Endothelial cell of umbilical vein (primary cell): ENCODE measurements at regions of chr5 and their contacts with region 1.

Region 1: DNA sequence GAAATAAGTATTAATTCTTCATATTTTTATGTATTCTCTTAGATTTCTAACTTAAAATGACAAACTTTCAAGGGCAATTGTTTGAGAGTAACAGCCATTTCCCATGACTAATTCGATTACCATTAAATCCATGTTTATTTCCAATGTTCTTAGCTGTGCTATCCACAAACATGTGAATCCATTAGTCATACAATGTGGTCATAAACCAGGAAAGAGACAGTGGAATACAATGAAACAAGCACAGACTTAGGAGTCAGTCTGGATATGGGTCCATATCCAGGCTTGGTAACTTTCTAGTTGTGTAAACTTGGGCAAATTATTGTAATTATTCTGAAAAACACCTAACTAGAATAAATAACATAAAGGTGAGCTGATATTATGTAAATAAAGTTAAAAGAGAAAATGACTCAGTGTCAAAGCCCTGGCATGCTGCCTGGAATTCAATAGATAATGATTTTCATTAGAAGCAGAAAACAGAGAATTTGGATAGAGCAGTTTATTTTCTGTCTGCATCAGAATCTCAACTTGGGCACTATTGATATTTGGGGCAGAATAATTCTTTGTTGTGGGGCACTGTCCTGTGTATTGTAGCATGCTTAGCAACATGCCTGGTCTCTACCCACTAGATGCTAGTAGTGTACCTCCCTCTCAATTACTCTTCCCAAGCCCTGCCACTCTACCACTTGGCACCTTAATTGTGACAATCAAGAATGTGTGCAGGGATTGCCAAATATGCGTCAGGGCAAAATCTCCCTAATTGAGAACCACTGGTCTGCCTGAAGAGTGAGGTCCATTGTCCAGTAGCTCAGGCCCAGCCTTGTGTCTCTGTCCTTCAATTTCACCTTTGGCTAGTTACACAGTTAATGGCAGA is 44.7 kb upstream of the SLC27A6 start:
- DNase-seq: peak; percentile 90
- H3K4me3 ChIP-seq: no peak overlapping the region
- H3K27ac ChIP-seq: peak overlapping the region; percentile 87
- H3K4me1 ChIP-seq: peaks cover 15% of the 10 kb centered on the region
- H3K27me3 ChIP-seq: no peaks in the 10 kb centered on the region
- CTCF ChIP-seq: no peak
- POLR2A ChIP-seq: no peak

Region 2: GRCh38 chr5:128815201-128815600 is 105.4 kb before region 1 on chr5:
- CTCF ChIA-PET with region 1: no interaction called
- POLR2A ChIA-PET with region 1: no interaction called
- dilution Hi-C with region 1: no loop called
- intact Hi-C with region 1: no loop called
- DNase-seq: no peak
- H3K4me3 ChIP-seq: no peak overlapping the region
- H3K27ac ChIP-seq: no peak overlapping the region
- H3K4me1 ChIP-seq: peaks cover 13% of the 10 kb centered on the region
- H3K27me3 ChIP-seq: no peaks in the 10 kb centered on the region
- CTCF ChIP-seq: no peak
- POLR2A ChIP-seq: no peak

Region 3: DNA sequence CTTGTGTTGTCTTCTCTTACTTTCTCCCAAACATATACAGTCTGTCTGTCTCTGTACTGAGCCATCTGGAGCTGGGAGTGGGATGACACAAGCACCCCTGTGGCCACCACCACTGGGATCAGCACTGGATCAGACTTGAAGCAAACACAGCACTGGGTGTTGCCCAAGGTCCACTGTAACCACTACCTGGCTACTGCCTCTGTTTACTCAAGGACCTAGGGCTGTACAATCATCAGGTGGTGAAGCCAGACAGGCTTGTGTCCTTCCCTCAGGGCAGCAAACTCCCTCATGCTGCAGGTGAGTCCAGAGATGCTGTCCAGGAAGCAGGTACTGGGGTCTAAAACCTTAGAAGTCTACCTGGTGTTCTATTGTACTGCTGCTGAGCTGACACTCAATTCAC is 25.0 kb before region 1 on chr5:
- CTCF ChIA-PET with region 1: no interaction called
- POLR2A ChIA-PET with region 1: no interaction called
- dilution Hi-C with region 1: no loop called
- intact Hi-C with region 1: loop called (anchors 1 kb)
- DNase-seq: no peak
- H3K4me3 ChIP-seq: no peak overlapping the region
- H3K27ac ChIP-seq: peak overlapping the region; percentile 84
- H3K4me1 ChIP-seq: peaks cover 9% of the 10 kb centered on the region
- H3K27me3 ChIP-seq: no peaks in the 10 kb centered on the region
- CTCF ChIP-seq: no peak
- POLR2A ChIP-seq: no peak

Region 4: DNA sequence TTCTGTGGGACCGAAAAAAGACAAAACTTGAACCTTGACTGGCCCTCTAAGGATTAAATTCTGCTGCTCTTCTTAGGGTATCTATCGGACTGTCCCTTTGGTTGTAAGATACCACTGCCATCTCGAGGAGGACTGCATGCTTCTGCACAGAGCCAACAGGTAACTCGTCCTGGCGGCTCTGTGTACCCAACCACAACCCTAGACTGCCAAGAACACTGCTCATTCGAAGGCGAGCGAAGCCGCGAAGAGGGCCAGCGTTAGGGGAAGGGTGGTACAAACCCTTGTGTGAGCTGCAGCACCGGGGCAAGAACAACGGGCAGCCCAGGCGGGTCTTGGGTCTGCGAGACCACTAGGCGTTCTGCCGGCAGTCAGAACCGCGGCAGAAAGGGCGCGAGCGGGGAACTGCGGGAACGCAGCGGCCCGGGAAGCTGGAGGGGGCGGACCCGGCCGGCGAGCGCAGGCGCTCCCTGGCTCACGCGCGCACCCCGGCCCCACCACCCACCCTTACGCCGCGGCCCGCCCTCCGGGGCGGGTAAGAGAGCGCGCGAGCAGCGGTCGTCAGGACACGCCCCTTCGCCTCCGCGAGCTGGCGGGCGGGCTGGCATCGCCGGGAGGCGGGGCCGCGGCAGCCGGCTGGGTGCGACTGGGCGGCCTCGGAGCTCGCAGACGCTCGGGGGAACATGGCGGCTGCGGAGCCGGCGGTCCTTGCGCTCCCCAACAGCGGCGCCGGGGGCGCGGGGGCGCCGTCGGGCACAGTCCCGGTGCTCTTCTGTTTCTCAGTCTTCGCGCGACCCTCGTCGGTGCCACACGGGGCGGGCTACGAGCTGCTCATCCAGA is 173.7 kb after region 1 on chr5 and contains the start of gene ISOC1:
- CTCF ChIA-PET with region 1: no interaction called
- POLR2A ChIA-PET with region 1: no interaction called
- dilution Hi-C with region 1: no loop called
- intact Hi-C with region 1: loop called (anchors 1 kb)
- DNase-seq: peak; percentile 93
- H3K4me3 ChIP-seq: peak within 1 kb of the TSS; percentile 71 to 93 (median 75)
- H3K27ac ChIP-seq: peak within 1 kb of the TSS; percentile 13
- H3K4me1 ChIP-seq: peaks cover 27% of the 10 kb centered on the region
- H3K27me3 ChIP-seq: peaks cover 0 to 2% of the 10 kb centered on the region in 2 experiments
- CTCF ChIP-seq: no peak
- POLR2A ChIP-seq: peak; percentile 83
- total RNA-seq, gene ISOC1: 20.7 and 21.4 TPM in 2 replicates